ENCODE measurements at regions of chr5 and their contacts with region 1.

Region 1: GRCh38 chr5:142769741-142770631 is at the start of gene ARHGAP26:
- DNase-seq: peak; percentile 97 to 98
- H3K4me3 ChIP-seq: peak within 1 kb of the TSS; percentile 98
- H3K4me3 Mint-ChIP-seq: peak within 1 kb of the TSS; percentile 99
- H3K27ac Mint-ChIP-seq: peak within 1 kb of the TSS; percentile 79
- H3K4me1 ChIP-seq: no peaks in the 10 kb centered on the region
- H3K4me1 Mint-ChIP-seq: peaks cover 15% of the 10 kb centered on the region
- H3K27me3 ChIP-seq: no peaks in the 10 kb centered on the region
- H3K27me3 Mint-ChIP-seq: no peaks in the 10 kb centered on the region
- CTCF ChIP-seq: peak in 1 of 2 experiments; percentile 38
- total RNA-seq, gene ARHGAP26: 74.6 and 79.8 TPM in 2 replicates

Region 2: DNA sequence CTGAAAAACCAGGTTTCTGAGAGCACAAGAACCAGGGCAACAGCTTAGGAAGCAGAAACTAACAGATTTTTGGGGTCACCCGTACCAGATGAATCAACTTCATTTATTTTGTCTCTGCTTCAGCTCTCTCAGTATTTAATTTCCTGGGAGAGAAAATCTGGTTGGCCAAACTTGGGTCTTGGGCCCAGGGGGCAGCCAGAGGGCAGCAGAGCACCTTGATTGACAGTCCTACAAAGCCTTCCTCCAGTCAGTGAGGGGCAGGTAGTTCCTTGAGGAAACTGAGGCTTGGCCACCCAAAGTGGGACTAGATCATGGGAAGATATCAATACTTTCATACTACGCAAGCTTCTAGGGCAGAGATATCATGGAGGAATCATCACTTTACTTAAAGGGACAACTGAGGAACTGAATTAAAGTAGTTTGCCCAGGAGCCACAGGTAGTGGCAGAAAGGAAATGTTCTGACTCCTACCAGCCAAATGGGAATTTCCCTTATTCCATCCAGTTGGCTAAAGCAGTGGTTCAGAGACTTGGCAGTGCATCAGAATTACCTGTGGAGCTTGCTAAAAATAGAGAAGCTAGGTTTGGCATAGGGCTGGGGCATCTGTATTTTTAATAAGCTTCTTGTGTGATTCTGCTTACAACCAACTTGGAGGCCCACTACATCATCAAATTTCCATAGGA is 21.3 kb before region 1 on chr5:
- CTCF ChIA-PET with region 1: interaction called, 7 read pairs
- POLR2A ChIA-PET with region 1: interaction called, 13 read pairs
- intact Hi-C with region 1: no loop called
- DNase-seq: peak; percentile 60 to 73
- H3K4me3 ChIP-seq: no peak overlapping the region
- H3K4me3 Mint-ChIP-seq: no peak overlapping the region
- H3K27ac Mint-ChIP-seq: no peak overlapping the region
- H3K4me1 ChIP-seq: no peaks in the 10 kb centered on the region
- H3K4me1 Mint-ChIP-seq: peaks cover 11% of the 10 kb centered on the region
- H3K27me3 ChIP-seq: no peaks in the 10 kb centered on the region
- H3K27me3 Mint-ChIP-seq: no peaks in the 10 kb centered on the region
- CTCF ChIP-seq: peak; percentile 80 to 94

Region 3: DNA sequence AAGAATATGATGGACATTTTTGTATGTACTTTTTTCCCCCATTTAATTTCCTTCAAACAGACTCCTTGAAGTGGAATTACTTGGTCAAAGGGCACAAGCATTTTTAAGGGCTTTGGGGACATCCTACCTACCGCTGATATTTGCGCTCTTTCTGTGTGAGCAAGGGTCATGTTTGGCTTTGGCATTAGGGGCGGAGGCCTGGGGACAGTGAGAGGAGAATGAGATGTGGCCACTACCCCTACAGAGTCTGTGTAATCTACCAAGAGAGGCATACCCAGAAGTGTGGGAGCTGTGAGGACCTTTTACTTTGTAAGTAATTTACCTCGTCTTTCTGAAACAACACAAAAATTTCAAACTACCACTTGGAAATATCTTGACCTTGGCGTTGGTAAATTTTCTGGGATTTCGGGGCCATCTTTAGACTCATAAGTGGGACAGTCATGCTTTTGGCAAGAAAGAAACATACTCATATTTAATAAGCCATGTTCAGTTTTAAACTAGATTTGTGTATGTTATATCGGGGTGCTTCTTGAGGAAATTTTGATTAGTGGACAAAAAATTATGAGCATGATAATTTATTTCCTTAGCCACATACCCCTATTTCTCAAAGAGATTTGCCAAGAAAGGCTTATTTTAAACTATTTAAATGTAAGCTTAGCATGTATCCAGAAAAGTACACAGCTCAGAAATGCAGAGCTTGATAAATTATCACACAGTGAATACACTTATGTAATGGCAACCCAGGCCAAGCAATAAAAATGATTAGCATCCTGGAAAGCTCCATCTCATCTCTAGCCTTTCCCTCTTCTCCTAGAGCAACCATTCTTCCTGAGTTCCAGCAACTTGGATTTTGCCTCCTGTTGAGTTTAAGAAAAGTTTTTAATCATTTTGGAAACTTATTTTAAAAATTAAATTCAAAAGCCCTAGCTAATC is 63.8 kb after region 1 on chr5:
- CTCF ChIA-PET with region 1: interaction called, 4 read pairs
- POLR2A ChIA-PET with region 1: no interaction called
- intact Hi-C with region 1: loop called (anchors 1 kb)
- DNase-seq: peak; percentile 80 to 85
- H3K4me3 ChIP-seq: peak overlapping the region; percentile 22
- H3K4me3 Mint-ChIP-seq: peak overlapping the region; percentile 68
- H3K27ac Mint-ChIP-seq: peak overlapping the region; percentile 65
- H3K4me1 ChIP-seq: peaks cover 67% of the 10 kb centered on the region
- H3K4me1 Mint-ChIP-seq: peaks cover 61% of the 10 kb centered on the region
- H3K27me3 ChIP-seq: no peaks in the 10 kb centered on the region
- H3K27me3 Mint-ChIP-seq: no peaks in the 10 kb centered on the region
- CTCF ChIP-seq: no peak

Region 4: DNA sequence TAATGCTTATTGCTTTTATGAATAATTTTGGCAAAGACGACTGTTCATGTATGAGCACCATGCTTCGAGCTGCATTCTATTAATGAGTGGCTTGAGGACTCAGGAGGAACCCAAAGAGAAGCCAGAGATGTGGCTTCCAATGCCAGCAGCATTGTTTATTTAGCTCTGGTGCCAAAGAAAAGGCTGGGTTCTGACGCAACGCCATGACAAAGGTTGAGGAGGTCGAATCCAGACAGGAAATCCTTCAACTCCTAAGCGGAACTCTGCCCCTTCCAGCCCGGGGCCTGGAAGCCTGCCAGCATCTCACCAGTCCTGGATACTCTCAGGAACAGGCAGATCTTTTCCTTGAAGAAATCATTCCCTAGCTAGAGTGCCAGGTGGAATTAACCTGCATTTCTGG is 104.6 kb after region 1 on chr5:
- CTCF ChIA-PET with region 1: interaction called, 11 read pairs
- POLR2A ChIA-PET with region 1: interaction called, 6 read pairs
- intact Hi-C with region 1: no loop called
- DNase-seq: no peak
- H3K4me3 ChIP-seq: no peak overlapping the region
- H3K4me3 Mint-ChIP-seq: no peak overlapping the region
- H3K27ac Mint-ChIP-seq: no peak overlapping the region
- H3K4me1 ChIP-seq: no peaks in the 10 kb centered on the region
- H3K4me1 Mint-ChIP-seq: no peaks in the 10 kb centered on the region
- H3K27me3 ChIP-seq: no peaks in the 10 kb centered on the region
- H3K27me3 Mint-ChIP-seq: no peaks in the 10 kb centered on the region
- CTCF ChIP-seq: no peak

Region 5: DNA sequence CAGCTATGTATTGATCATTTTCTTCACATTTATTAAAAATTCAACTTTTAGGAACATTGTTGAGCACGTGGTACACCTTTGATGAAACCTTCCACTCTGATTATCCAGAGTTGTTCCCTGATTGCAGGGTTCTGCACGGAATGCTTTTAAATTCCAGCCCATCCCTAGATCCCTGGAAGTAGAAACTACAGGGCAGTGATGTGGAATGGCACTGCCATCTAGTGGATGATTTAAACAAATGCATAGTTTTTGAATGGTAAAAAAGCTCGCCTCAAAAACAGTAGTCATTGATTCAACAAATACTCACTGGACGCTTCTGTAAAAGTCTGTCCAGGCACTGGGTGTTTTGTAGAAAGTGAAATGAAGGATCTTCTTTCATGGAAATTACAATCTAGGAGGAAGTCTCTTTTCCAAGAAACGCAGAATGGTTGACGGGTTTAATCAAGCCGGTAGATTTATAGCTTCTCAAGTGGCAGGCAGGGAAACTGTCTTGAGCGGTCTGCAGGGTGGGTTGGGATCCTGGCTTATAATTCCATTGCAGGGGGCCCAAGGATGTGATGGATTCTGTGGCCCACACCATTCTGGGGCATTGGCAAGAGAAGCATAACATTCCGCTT is 118.6 kb after region 1 on chr5:
- CTCF ChIA-PET with region 1: interaction called, 11 read pairs
- POLR2A ChIA-PET with region 1: no interaction called
- intact Hi-C with region 1: no loop called
- DNase-seq: peak; percentile 54 to 59
- H3K4me3 ChIP-seq: no peak overlapping the region
- H3K4me3 Mint-ChIP-seq: no peak overlapping the region
- H3K27ac Mint-ChIP-seq: no peak overlapping the region
- H3K4me1 ChIP-seq: peaks cover 17% of the 10 kb centered on the region
- H3K4me1 Mint-ChIP-seq: peaks cover 7% of the 10 kb centered on the region
- H3K27me3 ChIP-seq: no peaks in the 10 kb centered on the region
- H3K27me3 Mint-ChIP-seq: no peaks in the 10 kb centered on the region
- CTCF ChIP-seq: peak; percentile 68 to 69

Measured in Caco-2 (cell line).